Astrocyte of the cerebellum (primary cell): ENCODE measurements at regions of chr6 and their contacts with region 1.

Region 1: GRCh38 chr6:132298344-132298949 is 102.8 kb downstream of the MOXD1 start:
- DNase-seq: peak; percentile 39
- H3K4me3 ChIP-seq: no peak overlapping the region
- CTCF ChIP-seq: peak; percentile 72

Region 2: DNA sequence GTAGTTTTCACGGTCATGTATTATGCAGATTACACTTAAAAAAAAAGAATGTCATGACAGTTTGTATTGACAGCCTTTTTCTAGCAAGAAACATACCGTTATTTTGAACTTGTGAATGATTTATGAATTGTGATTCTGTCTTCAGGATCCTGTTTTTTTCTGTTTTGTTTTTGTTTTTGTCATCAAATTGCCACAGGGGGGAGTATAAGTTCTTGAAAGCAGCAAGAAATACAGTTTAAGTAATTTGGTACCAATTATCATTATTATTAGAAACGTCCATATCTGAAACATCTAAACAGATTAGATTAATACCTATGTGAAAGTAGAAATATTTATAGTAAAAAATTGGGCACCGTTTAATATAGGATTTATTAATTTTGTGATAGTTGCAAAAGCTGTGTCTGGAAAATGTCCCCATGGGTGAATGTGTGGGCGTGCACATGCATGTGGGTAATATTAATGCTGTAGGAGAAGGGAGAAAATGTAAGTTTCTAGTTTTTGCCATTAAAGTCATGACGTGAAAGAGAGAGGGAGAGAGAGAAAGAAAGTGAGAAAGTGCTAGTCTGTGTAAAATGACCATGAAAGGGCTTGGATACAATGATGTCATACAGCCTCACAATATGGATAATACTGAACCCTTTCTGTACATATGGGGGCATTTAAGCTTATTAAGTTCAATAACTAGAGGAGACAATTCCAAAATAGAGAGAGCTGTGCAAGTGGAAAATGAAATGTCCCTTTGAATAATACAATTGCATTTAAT is 337.9 kb before region 1 on chr6:
- in situ Hi-C with region 1: no loop called
- DNase-seq: no peak
- H3K4me3 ChIP-seq: no peak overlapping the region
- CTCF ChIP-seq: no peak

Region 3: GRCh38 chr6:132483779-132484679 is 185.6 kb after region 1 on chr6:
- in situ Hi-C with region 1: loop called (anchors 10 kb)
- DNase-seq: peak; percentile 57
- H3K4me3 ChIP-seq: no peak overlapping the region
- CTCF ChIP-seq: peak; percentile 43